T-cell (primary cell): ENCODE measurements at regions of chr1 and their contacts with region 1.

Region 1: GRCh38 chr1:156104065-156104810 is 10.3 kb upstream of the LMNA start:
- DNase-seq: peak in 27 of 35 experiments; percentile 18 to 79 (median 51)
- ATAC-seq: peak in 2 of 4 experiments; percentile 19 to 25
- H3K4me3 ChIP-seq: no peak overlapping the region
- H3K4me3 Mint-ChIP-seq: peak overlapping the region in 1 of 3 donors; percentile 80
- H3K27ac ChIP-seq: peak overlapping the region; percentile 99
- H3K27ac Mint-ChIP-seq: peak overlapping the region; percentile 75 to 76
- H3K4me1 ChIP-seq: peaks cover 14 to 45% of the 10 kb centered on the region in 2 experiments
- H3K4me1 Mint-ChIP-seq: peaks cover 50 to 70% (median 56%) of the 10 kb centered on the region in 3 donors
- H3K27me3 ChIP-seq: no peaks in the 10 kb centered on the region
- H3K27me3 Mint-ChIP-seq: no peaks in the 10 kb centered on the region

Region 2: DNA sequence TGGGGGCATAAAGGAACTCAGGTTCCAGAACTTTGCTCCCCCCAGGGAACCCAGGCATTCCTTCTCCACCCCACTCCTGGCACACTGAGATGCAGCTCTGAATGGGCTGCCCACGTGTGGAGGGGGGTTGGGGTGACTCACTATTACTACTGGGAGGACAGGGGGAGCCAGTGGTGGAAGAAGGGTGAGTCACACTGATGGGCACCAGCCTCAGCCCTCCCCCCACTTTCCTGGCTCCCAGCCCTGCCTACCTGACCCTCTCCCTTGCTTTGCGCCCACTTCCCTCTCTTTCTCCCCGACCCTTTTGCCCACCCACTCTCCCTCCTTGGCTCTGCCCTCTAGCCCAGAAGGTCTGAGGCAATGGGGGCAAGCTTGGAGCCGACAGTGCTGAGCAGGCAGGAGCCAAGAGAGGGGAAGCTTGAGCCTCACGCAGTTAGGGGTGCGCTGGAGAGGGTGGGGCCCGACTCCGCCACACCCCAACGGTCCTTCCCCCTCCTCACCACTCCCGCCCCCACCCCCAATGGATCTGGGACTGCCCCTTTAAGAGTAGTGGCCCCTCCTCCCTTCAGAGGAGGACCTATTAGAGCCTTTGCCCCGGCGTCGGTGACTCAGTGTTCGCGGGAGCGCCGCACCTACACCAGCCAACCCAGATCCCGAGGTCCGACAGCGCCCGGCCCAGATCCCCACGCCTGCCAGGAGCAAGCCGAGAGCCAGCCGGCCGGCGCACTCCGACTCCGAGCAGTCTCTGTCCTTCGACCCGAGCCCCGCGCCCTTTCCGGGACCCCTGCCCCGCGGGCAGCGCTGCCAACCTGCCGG is 10.1 kb after region 1 on chr1 and contains the start of gene LMNA:
- CTCF ChIA-PET with region 1: interaction called in 1 of 2 experiments, 5 read pairs
- POLR2A ChIA-PET with region 1: interaction called, 5 to 26 read pairs
- DNase-seq: peak in 34 of 35 experiments; percentile 20 to 85 (median 53)
- ATAC-seq: peak; percentile 77 to 84 (median 82)
- H3K4me3 ChIP-seq: peak within 1 kb of the TSS; percentile 78 to 86
- H3K4me3 Mint-ChIP-seq: peak within 1 kb of the TSS; percentile 85 to 93 (median 92)
- H3K27ac ChIP-seq: peak within 1 kb of the TSS; percentile 68
- H3K27ac Mint-ChIP-seq: peak within 1 kb of the TSS; percentile 75 to 79
- H3K4me1 ChIP-seq: peaks cover 0 to 34% of the 10 kb centered on the region in 2 experiments
- H3K4me1 Mint-ChIP-seq: peaks cover 23 to 41% (median 33%) of the 10 kb centered on the region in 3 donors
- H3K27me3 ChIP-seq: peaks cover 6 to 37% of the 10 kb centered on the region in 2 experiments
- H3K27me3 Mint-ChIP-seq: peaks cover 17 to 18% of the 10 kb centered on the region in 2 donors
- total RNA-seq, gene LMNA: 40.3 to 970 (median 57.3) TPM